ENCODE measurements at regions of chr3 and their contacts with region 1.

Region 1: DNA sequence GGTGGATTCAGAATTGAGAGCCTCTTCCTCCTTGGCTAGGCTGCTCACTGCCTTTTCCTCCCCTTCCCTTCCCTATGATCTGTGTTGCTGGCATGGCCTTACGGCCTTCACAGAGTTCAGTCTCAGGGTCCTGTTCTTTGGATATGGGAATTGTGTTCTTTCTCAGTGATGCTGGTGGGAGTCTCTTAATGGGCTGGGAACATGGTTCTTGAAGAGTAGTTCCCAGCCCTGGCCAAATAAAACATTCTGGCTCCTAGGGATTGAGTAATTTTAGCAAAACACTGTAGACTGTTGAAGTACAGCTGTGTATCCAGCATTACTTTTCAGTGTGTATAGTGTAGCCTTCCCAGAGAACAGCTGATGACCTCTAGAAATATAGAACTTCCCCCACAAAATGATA is 22.6 kb upstream of the FILIP1L start:
- DNase-seq: no peak
- ATAC-seq: no peak
- H3K4me3 Mint-ChIP-seq: no peak overlapping the region
- H3K27ac Mint-ChIP-seq: no peak overlapping the region
- H3K4me1 Mint-ChIP-seq: no peaks in the 10 kb centered on the region
- H3K27me3 Mint-ChIP-seq: no peaks in the 10 kb centered on the region
- CTCF ChIP-seq: no peak

Region 2: DNA sequence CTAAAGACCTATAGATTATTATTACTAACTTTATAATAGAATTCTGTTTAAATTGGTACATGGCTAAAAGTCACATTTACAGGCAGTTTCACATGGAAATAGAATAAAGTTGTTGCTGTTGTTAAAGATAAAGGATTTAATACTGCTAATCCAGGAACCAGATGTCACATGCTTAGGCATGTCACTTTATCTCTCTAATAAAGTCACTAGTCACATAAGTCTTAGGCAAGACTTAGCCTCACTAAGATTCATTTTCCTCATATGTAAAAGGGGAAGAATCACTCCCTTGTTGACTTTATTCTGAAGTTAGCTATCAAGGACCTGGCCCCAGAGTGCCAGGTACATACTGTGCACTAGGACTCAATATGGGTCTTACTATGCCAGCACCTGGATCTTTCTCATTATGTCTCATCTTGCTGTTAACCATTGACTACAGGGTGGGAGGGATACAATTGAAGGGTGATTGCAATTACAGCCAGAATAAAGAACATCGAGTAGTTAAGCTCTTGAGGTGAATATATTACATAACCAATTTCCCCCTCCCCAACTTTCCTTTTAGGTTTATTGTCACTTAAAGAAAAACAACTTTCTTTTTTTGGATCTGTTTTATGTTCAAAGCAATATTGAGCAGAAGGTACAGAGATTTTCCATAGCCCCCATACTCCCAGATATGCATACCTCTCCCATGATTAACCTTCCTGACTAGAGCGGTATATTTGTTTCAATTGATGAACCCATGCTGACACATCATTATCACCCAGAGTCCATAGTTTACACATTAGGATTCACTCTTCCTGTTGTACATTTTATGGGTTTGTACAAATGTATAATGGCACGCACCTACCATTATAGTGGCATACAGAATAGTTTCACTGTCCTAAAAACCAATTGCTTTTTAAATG is 301.1 kb after region 1 on chr3:
- CTCF ChIA-PET with region 1: no interaction called
- POLR2A ChIA-PET with region 1: no interaction called
- intact Hi-C with region 1: no loop called
- DNase-seq: no peak
- ATAC-seq: no peak
- H3K4me3 Mint-ChIP-seq: no peak overlapping the region
- H3K27ac Mint-ChIP-seq: no peak overlapping the region
- H3K4me1 Mint-ChIP-seq: peaks cover 8% of the 10 kb centered on the region
- H3K27me3 Mint-ChIP-seq: no peaks in the 10 kb centered on the region
- CTCF ChIP-seq: no peak

Region 3: DNA sequence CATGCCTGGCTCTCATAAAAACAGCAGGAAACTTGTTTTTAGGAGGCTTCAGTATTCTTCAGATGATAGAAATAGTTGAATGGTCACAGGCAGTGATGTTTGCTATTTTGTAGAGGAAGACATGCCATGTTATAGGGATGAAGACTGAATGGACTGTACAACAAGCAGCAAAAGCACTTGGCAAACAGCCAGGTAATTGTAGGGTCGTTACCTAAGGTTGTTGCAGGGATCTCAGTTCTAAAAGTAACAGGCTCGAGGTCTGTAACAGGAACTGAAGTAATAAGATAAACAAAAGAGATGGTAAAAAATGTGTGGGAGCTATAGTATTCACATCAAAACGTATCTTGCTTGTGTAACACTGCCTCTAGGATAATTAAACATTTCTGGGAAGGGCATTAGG is 688.7 kb after region 1 on chr3:
- CTCF ChIA-PET with region 1: no interaction called
- POLR2A ChIA-PET with region 1: no interaction called
- intact Hi-C with region 1: loop called (anchors 10 kb)
- DNase-seq: no peak
- ATAC-seq: no peak
- H3K4me3 Mint-ChIP-seq: no peak overlapping the region
- H3K27ac Mint-ChIP-seq: no peak overlapping the region
- H3K4me1 Mint-ChIP-seq: no peaks in the 10 kb centered on the region
- H3K27me3 Mint-ChIP-seq: peaks cover 14% of the 10 kb centered on the region
- CTCF ChIP-seq: no peak

Measured in activated CD8-positive, alpha-beta T cell treated with anti-CD3 and anti-CD28 coated beads for 36 hours (primary cell).